CD4-positive, alpha-beta T cell (primary cell): ENCODE measurements at regions of chr9 and their contacts with region 1.

Region 1: GRCh38 chr9:31597977-31598376 is 786.5 kb upstream of the ACO1 start:
- DNase-seq: peak in 3 of 14 experiments; percentile 10 to 62 (median 26)
- ATAC-seq: peak; percentile 92
- H3K4me3 ChIP-seq: no peak overlapping the region
- H3K4me3 Mint-ChIP-seq: no peak overlapping the region
- H3K27ac ChIP-seq: no peak overlapping the region
- H3K27ac Mint-ChIP-seq: no peak overlapping the region
- H3K4me1 ChIP-seq: peaks cover 6% of the 10 kb centered on the region
- H3K4me1 Mint-ChIP-seq: peaks cover 10% of the 10 kb centered on the region
- H3K27me3 ChIP-seq: no peaks in the 10 kb centered on the region
- H3K27me3 Mint-ChIP-seq: no peaks in the 10 kb centered on the region
- CTCF ChIP-seq: no peak

Region 2: DNA sequence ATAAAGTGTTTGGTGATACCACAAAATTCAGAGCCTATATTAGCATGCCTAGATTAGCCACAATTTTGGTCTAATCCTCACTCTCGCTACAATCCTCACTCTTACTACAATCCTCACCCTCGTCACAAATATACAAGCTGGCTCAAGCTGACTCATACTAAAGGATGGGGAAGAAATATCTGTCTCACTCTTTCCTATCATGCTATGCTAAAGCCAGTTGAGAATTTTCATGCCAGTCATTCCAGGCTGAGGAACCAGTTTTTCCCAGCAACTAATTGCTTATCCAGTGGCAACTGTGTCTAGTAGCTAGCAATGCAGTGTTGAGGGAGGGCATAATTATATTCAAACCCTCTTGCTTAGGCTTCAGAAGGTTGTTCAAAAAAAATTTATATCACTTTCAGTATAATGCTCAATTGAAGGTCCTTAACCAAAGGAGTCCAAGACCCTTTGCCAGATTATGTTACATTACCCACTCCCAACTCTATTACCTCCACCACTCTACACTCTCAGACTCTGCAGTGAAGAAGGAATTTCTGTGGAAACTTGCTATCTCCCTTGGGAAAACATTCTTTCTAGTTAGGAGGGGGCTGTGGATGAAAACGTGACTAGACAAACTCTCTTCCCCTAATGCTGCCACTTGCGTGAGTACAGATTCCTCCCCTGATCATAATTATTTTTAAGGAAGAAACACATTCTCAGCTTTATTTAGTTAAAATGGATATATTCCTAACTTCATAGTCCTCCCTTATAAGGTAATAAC is 23.8 kb before region 1 on chr9:
- CTCF ChIA-PET with region 1: no interaction called
- POLR2A ChIA-PET with region 1: no interaction called
- intact Hi-C with region 1: no loop called
- DNase-seq: no peak
- ATAC-seq: no peak
- H3K4me3 ChIP-seq: no peak overlapping the region
- H3K4me3 Mint-ChIP-seq: no peak overlapping the region
- H3K27ac ChIP-seq: no peak overlapping the region
- H3K27ac Mint-ChIP-seq: no peak overlapping the region
- H3K4me1 ChIP-seq: no peaks in the 10 kb centered on the region
- H3K4me1 Mint-ChIP-seq: no peaks in the 10 kb centered on the region
- H3K27me3 ChIP-seq: no peaks in the 10 kb centered on the region
- H3K27me3 Mint-ChIP-seq: no peaks in the 10 kb centered on the region
- CTCF ChIP-seq: no peak

Region 3: DNA sequence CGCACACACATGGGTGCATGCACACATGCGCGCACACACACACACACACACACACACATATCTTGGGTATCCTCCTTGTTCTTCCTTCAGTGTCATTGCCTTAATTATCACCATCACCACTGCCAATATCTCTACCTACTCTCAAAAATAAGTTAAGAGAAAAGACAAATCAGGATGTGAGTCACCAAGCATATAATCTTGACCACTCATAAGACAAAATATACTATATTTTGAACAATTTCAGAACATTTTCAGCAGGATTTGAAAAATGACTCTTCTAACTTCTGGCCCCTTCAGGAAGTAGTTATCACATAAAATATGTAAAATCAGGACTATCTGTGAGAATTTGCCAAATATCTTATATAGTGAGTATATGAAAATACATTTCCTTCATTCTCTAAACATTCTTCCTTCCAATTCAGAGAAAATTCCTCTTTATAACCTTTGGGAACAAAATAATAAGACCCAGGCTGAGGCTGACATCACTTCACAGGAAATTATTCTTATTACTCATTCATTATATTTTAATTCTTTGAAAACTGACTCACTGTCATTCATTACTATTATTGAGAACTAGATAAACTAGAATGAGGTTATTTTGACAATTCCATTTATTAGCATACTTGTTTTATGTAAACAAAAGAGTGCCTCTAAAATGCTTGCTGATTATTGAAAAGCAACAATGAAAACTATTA is 14.5 kb after region 1 on chr9:
- CTCF ChIA-PET with region 1: no interaction called
- POLR2A ChIA-PET with region 1: no interaction called
- intact Hi-C with region 1: loop called in 1 of 2 experiments (anchors 2 kb)
- DNase-seq: no peak
- ATAC-seq: no peak
- H3K4me3 ChIP-seq: no peak overlapping the region
- H3K4me3 Mint-ChIP-seq: no peak overlapping the region
- H3K27ac ChIP-seq: no peak overlapping the region
- H3K27ac Mint-ChIP-seq: no peak overlapping the region
- H3K4me1 ChIP-seq: no peaks in the 10 kb centered on the region
- H3K4me1 Mint-ChIP-seq: no peaks in the 10 kb centered on the region
- H3K27me3 ChIP-seq: no peaks in the 10 kb centered on the region
- H3K27me3 Mint-ChIP-seq: no peaks in the 10 kb centered on the region
- CTCF ChIP-seq: no peak

Region 4: GRCh38 chr9:31958572-31958971 is 360.6 kb after region 1 on chr9:
- CTCF ChIA-PET with region 1: no interaction called
- POLR2A ChIA-PET with region 1: no interaction called
- intact Hi-C with region 1: no loop called
- DNase-seq: no peak
- ATAC-seq: no peak
- H3K4me3 ChIP-seq: no peak overlapping the region
- H3K4me3 Mint-ChIP-seq: no peak overlapping the region
- H3K27ac ChIP-seq: no peak overlapping the region
- H3K27ac Mint-ChIP-seq: no peak overlapping the region
- H3K4me1 ChIP-seq: no peaks in the 10 kb centered on the region
- H3K4me1 Mint-ChIP-seq: no peaks in the 10 kb centered on the region
- H3K27me3 ChIP-seq: no peaks in the 10 kb centered on the region
- H3K27me3 Mint-ChIP-seq: no peaks in the 10 kb centered on the region
- CTCF ChIP-seq: no peak